ENCODE measurements at regions of chr1 and their contacts with region 1.

Region 1: DNA sequence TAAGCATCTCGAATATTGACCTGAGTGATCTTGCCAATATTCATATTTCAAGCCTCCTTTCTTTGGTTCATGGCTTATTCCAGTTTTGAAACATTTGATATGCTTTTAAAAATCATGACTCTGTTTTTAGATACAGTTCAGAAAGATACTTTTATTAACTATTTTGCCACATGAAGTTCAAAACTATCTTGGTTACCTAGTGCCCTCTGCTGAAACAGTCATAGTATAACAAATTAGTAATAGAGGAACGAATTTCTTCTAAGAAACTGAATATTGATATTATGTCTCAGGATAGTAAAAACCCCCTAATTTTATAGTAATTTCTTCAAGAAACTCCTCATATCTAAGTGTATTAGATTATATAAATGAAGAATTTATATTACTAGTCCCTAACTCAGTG is 52.6 kb upstream of the RC3H1 start:
- DNase-seq: no peak
- ATAC-seq: no peak
- H3K4me3 ChIP-seq: no peak overlapping the region
- H3K27ac ChIP-seq: no peak overlapping the region
- H3K4me1 ChIP-seq: peaks cover 0 to 2% (median 0%) of the 10 kb centered on the region in 12 donors
- H3K27me3 ChIP-seq: no peaks in the 10 kb centered on the region
- CTCF ChIP-seq: peak in 11 of 12 donors; percentile 18 to 62 (median 43)
- POLR2A ChIP-seq: no peak

Region 2: DNA sequence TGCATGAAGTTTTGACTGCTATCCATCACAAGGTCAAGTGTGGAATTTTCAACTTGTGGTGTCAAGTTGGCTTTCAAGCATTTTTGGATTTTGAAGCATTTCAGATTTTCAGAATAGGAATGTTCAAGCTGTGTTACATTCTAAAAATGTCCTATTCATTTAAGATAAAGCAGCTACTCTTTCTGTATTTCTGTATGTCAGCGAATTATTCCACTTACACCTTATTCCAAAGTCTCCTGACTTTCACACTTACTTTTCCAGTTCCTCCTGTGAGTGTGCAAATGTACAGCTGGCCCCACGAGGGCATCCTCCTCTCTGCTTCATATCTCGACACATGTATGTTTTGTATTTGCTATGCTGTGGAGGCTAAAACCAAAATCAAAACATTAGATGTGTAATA is 104.5 kb before region 1 on chr1:
- intact Hi-C with region 1: loop called in 2 of 10 experiments (anchors 10 kb)
- DNase-seq: no peak
- ATAC-seq: no peak
- H3K4me3 ChIP-seq: no peak overlapping the region
- H3K27ac ChIP-seq: no peak overlapping the region
- H3K4me1 ChIP-seq: no peaks in the 10 kb centered on the region
- H3K27me3 ChIP-seq: no peaks in the 10 kb centered on the region
- CTCF ChIP-seq: no peak
- POLR2A ChIP-seq: no peak

Region 3: DNA sequence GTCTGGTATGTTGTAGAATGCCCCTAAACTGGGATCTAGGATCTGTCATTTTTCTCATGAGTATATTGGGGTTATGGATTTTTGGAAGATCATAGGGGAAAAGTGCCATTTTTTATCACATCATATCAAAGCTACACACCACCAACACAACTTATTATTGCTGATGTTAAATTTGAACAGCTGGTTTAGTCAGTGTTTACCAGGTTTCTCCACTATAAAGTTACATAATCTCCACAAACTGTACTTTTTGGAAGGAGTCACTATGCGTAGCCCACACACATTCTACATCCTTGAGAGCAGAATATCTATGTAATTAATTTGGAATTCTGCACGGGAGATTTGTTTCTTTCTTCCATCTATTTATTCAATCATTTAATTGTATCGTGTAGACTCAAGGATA is 87.8 kb before region 1 on chr1:
- intact Hi-C with region 1: loop called in 1 of 10 experiments (anchors 10 kb)
- DNase-seq: no peak
- ATAC-seq: no peak
- H3K4me3 ChIP-seq: no peak overlapping the region
- H3K27ac ChIP-seq: no peak overlapping the region
- H3K4me1 ChIP-seq: no peaks in the 10 kb centered on the region
- H3K27me3 ChIP-seq: no peaks in the 10 kb centered on the region
- CTCF ChIP-seq: no peak
- POLR2A ChIP-seq: no peak